ENCODE measurements at regions of chr6 and their contacts with region 1.

Region 1: GRCh38 chr6:56708810-56709597 is 66.3 kb upstream of the DST start:
- DNase-seq: no peak
- ATAC-seq: peak; percentile 40 to 78 (median 74)
- H3K4me3 ChIP-seq: no peak overlapping the region
- H3K27ac ChIP-seq: no peak overlapping the region
- H3K4me1 ChIP-seq: no peaks in the 10 kb centered on the region
- H3K27me3 ChIP-seq: no peaks in the 10 kb centered on the region
- CTCF ChIP-seq: peak; percentile 29 to 73 (median 44)

Region 2: DNA sequence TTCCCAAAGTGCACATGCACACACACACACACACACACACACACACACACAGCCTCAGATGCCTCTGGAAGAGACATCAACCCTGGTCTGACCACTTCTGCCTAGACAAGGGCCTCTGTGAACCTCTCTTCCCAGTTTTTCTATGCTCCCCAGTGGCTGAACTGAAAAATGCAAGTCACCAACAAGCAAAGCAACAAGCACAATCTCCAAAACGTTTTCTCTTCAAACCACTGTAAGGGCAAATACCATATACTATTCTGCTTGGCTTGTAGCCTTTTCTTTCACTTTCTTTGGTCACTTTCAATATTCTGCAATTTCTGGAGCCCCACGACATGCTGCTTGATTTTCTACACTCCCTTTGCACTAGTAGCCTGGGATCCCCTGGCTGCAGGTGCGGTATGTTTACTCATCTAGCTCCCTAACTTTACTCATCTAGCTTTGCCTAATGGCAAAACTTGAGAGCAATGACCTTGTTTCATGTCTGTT is 55.1 kb after region 1 on chr6:
- intact Hi-C with region 1: loop called in 1 of 3 experiments (anchors 5 kb)
- DNase-seq: no peak
- ATAC-seq: peak in 3 of 4 donors; percentile 56 to 74 (median 60)
- H3K4me3 ChIP-seq: no peak overlapping the region
- H3K27ac ChIP-seq: no peak overlapping the region
- H3K4me1 ChIP-seq: no peaks in the 10 kb centered on the region
- H3K27me3 ChIP-seq: no peaks in the 10 kb centered on the region
- CTCF ChIP-seq: no peak

Region 3: DNA sequence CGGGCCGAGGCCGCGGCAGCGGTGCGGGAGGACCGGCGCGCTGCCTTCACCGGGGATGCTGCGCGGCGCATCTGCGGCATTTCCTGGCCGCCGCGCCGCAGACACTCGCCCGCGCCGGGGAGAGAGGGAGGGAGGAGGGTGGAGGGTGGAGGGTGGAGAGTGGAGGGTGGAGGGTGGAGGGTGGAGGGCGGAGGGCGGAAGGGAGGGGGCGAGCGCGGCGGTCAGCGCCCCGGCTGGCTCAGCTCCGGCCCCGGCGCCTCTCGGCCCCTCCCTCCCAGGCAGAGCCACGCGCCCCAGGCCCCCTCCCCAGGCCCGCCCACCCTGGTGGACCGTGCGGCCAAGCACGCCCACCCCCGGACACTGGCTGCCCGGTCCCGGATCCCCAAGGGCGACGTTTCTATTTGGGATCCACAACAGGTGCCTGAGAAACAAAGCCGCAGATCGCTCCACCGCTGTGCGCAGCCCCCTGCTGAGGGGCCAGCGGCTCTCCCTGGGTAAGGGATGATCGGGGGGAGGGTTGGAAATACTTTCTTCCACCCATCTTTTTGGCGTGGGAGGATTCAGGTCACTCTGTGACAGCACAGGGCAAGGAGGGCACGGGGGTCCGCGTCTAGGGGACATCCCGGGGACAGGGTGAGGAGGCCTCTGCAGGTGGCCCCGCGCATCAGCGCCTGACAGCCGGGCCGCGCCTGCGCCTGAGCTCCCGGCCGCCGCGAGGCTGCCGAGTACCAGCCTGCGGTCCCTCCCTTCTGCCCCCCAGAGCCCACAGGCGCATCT is 134.8 kb after region 1 on chr6:
- intact Hi-C with region 1: loop called in 2 of 3 experiments (anchors 5 to 10 kb)
- DNase-seq: peak; percentile 30 to 78 (median 46)
- ATAC-seq: peak; percentile 80 to 92 (median 91)
- H3K4me3 ChIP-seq: peak overlapping the region; percentile 31 to 56 (median 37)
- H3K27ac ChIP-seq: peak overlapping the region in 3 of 4 donors; percentile 31 to 77 (median 67)
- H3K4me1 ChIP-seq: no peaks in the 10 kb centered on the region
- H3K27me3 ChIP-seq: peaks cover 0 to 16% (median 3%) of the 10 kb centered on the region in 4 donors
- CTCF ChIP-seq: peak in 1 of 4 donors; percentile 14

Region 4: GRCh38 chr6:56849896-56850295 is 140.9 kb after region 1 on chr6:
- intact Hi-C with region 1: loop called in 2 of 3 experiments (anchors 5 to 10 kb)
- DNase-seq: no peak
- ATAC-seq: no peak
- H3K4me3 ChIP-seq: no peak overlapping the region
- H3K27ac ChIP-seq: no peak overlapping the region
- H3K4me1 ChIP-seq: no peaks in the 10 kb centered on the region
- H3K27me3 ChIP-seq: no peaks in the 10 kb centered on the region
- CTCF ChIP-seq: no peak

Region 5: GRCh38 chr6:56927538-56928453 is 218.8 kb after region 1 on chr6:
- intact Hi-C with region 1: no loop called
- DNase-seq: no peak
- ATAC-seq: no peak
- H3K4me3 ChIP-seq: no peak overlapping the region
- H3K27ac ChIP-seq: no peak overlapping the region
- H3K4me1 ChIP-seq: no peaks in the 10 kb centered on the region
- H3K27me3 ChIP-seq: no peaks in the 10 kb centered on the region
- CTCF ChIP-seq: no peak

Measured in pancreas (tissue), 10 donors.